ENCODE measurements at regions of chr1 and their contacts with region 1.

Region 1: DNA sequence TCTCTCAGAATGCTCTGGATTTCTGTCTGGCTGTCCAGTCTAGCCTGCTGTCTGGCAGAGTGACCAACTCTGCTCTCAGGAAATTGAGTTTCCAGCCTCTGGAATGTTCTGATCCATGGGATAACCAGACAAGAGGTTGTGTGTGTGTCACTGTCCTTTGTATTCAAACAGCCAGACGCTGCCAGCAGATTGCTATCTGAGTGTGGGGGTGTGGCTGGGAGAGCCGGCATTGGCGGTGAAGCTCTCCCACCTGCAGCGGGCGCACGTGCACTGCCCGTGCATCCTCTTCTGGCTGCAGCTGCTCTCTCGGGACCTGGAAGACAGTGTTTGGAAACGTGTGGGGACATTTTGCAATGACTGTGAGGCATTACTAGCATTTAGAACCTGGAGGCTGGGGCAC is 26.1 kb downstream of the PKP1 start:
- DNase-seq: peak; percentile 98
- H3K4me3 Mint-ChIP-seq: peak overlapping the region; percentile 1
- H3K27ac Mint-ChIP-seq: peak overlapping the region; percentile 97
- H3K4me1 Mint-ChIP-seq: peaks cover 71% of the 10 kb centered on the region
- H3K27me3 Mint-ChIP-seq: no peaks in the 10 kb centered on the region
- CTCF ChIP-seq: peak; percentile 38

Region 2: DNA sequence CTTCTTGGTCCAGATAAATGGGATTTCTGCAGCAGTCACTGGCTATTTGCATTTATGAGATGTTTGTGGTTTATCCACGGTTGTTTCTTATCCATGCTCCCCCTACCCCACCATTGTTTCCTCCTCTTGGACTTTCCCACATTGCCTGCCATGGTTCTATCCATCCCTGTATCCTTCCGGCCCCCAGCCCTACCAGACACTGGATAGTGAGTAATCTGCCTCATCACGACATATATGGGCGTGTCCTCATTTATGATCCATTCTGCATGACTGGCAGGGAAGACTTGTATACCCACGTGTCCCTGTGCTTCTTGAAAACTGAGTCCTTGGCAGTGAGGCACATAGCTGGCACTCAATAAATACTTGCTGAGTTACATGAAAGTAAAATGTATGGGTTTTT is 237.3 kb before region 1 on chr1:
- CTCF ChIA-PET with region 1: no interaction called
- POLR2A ChIA-PET with region 1: no interaction called
- intact Hi-C with region 1: no loop called
- DNase-seq: peak; percentile 76
- H3K4me3 Mint-ChIP-seq: no peak overlapping the region
- H3K27ac Mint-ChIP-seq: no peak overlapping the region
- H3K4me1 Mint-ChIP-seq: peaks cover 7% of the 10 kb centered on the region
- H3K27me3 Mint-ChIP-seq: peaks cover 37% of the 10 kb centered on the region
- CTCF ChIP-seq: no peak

Region 3: DNA sequence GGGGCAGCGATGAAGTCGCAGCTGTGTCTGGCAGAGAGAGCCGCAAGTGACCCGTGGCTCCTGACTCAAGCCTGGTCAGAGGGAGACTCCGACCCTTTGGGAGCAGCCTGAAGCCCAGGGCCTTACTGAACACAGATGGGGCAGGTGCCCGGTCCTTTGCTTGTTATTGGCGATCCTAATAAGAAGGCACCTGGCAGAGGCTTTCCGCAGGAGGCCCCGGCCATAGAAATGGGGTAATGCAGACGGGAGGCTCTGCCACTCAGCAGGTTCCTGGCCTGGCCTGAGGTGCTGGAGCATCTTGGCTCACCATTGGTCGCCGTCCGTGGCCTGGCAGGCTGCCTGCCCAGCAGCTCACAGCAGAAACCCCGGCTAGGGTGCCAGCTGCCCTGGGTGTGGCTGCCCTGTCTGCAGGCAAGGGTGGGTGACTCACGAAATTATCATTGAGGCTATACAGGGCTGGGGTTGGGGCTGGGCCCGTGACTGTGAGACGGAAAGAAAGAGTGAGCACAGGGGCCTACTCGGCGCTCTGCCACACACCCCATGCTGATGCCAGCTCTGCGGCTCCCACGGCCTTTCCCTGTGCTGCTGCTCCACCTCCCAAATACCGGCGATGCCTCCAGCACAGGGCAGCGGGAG is 34.3 kb before region 1 on chr1:
- CTCF ChIA-PET with region 1: interaction called, 474 read pairs
- POLR2A ChIA-PET with region 1: interaction called, 3,819 read pairs
- intact Hi-C with region 1: loop called (anchors 1 kb)
- DNase-seq: peak; percentile 100
- H3K4me3 Mint-ChIP-seq: no peak overlapping the region
- H3K27ac Mint-ChIP-seq: peak overlapping the region; percentile 79
- H3K4me1 Mint-ChIP-seq: peaks cover 52% of the 10 kb centered on the region
- H3K27me3 Mint-ChIP-seq: no peaks in the 10 kb centered on the region
- CTCF ChIP-seq: no peak

Region 4: GRCh38 chr1:201295861-201296260 is 13.6 kb before region 1 on chr1:
- CTCF ChIA-PET with region 1: interaction called, 303 read pairs
- POLR2A ChIA-PET with region 1: interaction called, 3,819 read pairs
- intact Hi-C with region 1: loop called (anchors 1 kb)
- DNase-seq: peak; percentile 100
- H3K4me3 Mint-ChIP-seq: peak overlapping the region; percentile 42
- H3K27ac Mint-ChIP-seq: peak overlapping the region; percentile 75
- H3K4me1 Mint-ChIP-seq: peaks cover 50% of the 10 kb centered on the region
- H3K27me3 Mint-ChIP-seq: no peaks in the 10 kb centered on the region
- CTCF ChIP-seq: no peak

Region 5: DNA sequence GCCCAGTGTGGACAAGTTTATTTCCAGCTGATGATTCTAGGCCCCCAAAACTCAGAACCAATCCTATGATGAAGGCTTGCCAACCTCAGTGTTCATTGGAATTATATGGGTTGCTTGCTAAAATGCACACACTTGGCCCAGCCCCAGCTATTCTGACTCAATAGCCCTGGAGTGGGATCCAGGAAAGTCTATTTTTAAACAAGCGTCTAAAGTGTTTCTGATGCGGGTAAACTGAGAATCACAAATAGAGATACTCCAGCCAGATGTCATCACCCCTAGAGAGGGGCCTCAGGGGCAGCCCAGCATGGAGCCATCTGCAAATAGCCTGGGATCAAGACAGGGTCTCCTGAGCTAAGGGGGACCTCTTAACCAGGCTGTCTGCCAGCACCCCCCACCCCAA is 19.9 kb after region 1 on chr1:
- CTCF ChIA-PET with region 1: interaction called, 10 read pairs
- POLR2A ChIA-PET with region 1: interaction called, 18 read pairs
- intact Hi-C with region 1: no loop called
- DNase-seq: peak; percentile 76
- H3K4me3 Mint-ChIP-seq: no peak overlapping the region
- H3K27ac Mint-ChIP-seq: no peak overlapping the region
- H3K4me1 Mint-ChIP-seq: peaks cover 11% of the 10 kb centered on the region
- H3K27me3 Mint-ChIP-seq: no peaks in the 10 kb centered on the region
- CTCF ChIP-seq: no peak

Region 6: GRCh38 chr1:201353150-201353801 is 43.9 kb after region 1 on chr1:
- CTCF ChIA-PET with region 1: interaction called, 445 read pairs
- POLR2A ChIA-PET with region 1: interaction called, 159 read pairs
- intact Hi-C with region 1: no loop called
- DNase-seq: peak; percentile 79
- H3K4me3 Mint-ChIP-seq: no peak overlapping the region
- H3K27ac Mint-ChIP-seq: peak overlapping the region; percentile 63
- H3K4me1 Mint-ChIP-seq: peaks cover 37% of the 10 kb centered on the region
- H3K27me3 Mint-ChIP-seq: peaks cover 10% of the 10 kb centered on the region
- CTCF ChIP-seq: no peak